Endothelial cell of umbilical vein (primary cell): ENCODE measurements at regions of chr9 and their contacts with region 1.

Region 1: DNA sequence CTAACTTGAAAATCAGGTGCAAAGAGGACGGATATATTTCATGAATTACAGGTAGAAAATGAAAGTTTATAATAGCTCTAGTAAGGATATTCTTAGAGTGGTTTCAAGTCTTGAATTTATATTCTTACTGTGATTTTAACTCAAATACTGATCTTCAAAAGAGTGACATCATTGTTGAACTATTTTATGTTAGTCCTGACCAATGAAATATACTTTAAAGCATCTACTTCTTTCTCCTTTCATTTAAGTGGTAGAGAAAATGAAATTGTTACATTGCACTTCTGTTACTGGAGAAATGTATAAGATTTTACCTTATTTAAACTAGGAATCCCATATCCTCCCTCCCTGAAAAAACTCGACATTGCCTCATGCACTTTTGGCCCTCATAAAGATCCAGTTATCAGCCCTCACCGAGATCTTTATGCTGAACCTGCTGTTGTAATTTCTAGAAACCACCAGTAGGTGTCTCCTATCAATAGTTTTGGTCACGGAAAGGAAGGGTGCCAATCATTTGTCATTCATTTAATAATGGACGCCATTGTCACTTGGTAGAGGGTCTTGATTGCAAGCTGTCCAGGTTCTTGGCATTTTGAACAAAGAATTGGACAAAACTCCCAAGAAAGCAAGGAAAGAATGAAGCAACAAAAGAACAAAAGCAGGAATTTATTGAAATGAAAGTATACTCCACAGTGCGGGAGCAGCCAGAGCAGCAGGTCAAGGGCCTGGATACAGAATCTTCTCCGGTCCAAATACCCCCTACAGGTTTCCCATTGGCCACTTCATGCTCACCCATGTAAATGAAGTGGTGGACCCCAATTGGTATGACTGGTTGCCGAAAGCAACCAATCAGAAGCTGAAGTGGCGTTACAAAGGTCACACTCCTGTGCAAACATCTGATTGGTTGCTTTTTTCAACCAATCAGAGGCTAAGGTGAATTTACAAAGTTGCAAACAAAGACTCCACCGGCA is 524.2 kb downstream of the PSAT1 start:
- DNase-seq: peak; percentile 55
- H3K4me3 ChIP-seq: peak overlapping the region in 1 of 3 experiments; percentile 34
- H3K27ac ChIP-seq: peak overlapping the region; percentile 14
- H3K4me1 ChIP-seq: no peaks in the 10 kb centered on the region
- H3K27me3 ChIP-seq: no peaks in the 10 kb centered on the region
- CTCF ChIP-seq: peak; percentile 49 to 52
- POLR2A ChIP-seq: no peak

Region 2: GRCh38 chr9:79233542-79233941 is 412.4 kb after region 1 on chr9:
- CTCF ChIA-PET with region 1: interaction called, 11 read pairs
- POLR2A ChIA-PET with region 1: no interaction called
- dilution Hi-C with region 1: no loop called
- intact Hi-C with region 1: loop called (anchors 1 kb)
- DNase-seq: peak; percentile 34
- H3K4me3 ChIP-seq: no peak overlapping the region
- H3K27ac ChIP-seq: no peak overlapping the region
- H3K4me1 ChIP-seq: no peaks in the 10 kb centered on the region
- H3K27me3 ChIP-seq: peaks cover 0 to 3% of the 10 kb centered on the region in 2 experiments
- CTCF ChIP-seq: peak; percentile 42 to 54
- POLR2A ChIP-seq: no peak